Activated CD4-positive, alpha-beta T cell treated with anti-CD3 and anti-CD28 coated beads for 36 hours (primary cell): ENCODE measurements at regions of chr3 and their contacts with region 1.

Region 1: GRCh38 chr3:57397175-57398026 is 104.9 kb upstream of the ASB14 start:
- DNase-seq: peak; percentile 79
- ATAC-seq: peak; percentile 99
- H3K4me3 Mint-ChIP-seq: peak overlapping the region; percentile 7
- H3K27ac Mint-ChIP-seq: peak overlapping the region; percentile 48
- H3K4me1 Mint-ChIP-seq: peaks cover 14% of the 10 kb centered on the region
- H3K27me3 Mint-ChIP-seq: peaks cover 8% of the 10 kb centered on the region

Region 2: DNA sequence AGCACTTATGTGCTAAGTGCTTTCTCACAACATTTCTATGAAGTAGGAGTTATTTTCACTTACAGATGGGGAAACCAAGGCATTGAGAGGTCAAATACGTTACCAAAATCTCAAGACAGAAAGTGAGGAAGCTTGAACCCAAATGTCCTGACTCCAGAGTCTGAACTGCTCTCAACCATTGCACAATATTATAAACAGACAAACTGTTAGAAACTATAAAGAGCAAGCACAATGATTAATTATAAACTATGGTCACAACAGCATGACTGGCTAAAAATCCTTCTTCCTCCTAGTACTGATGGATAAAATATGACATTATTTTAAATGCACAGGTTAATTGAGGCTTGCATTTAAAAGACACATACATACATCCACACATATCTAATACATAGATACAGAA is 27.1 kb before region 1 on chr3:
- CTCF ChIA-PET with region 1: interaction called, 3 read pairs
- POLR2A ChIA-PET with region 1: no interaction called
- intact Hi-C with region 1: loop called in 1 of 2 experiments (anchors 1 kb)
- DNase-seq: no peak
- ATAC-seq: no peak
- H3K4me3 Mint-ChIP-seq: no peak overlapping the region
- H3K27ac Mint-ChIP-seq: no peak overlapping the region
- H3K4me1 Mint-ChIP-seq: no peaks in the 10 kb centered on the region
- H3K27me3 Mint-ChIP-seq: peaks cover 2% of the 10 kb centered on the region

Region 3: GRCh38 chr3:57421336-57421735 is 23.9 kb after region 1 on chr3:
- CTCF ChIA-PET with region 1: interaction called, 13 read pairs
- POLR2A ChIA-PET with region 1: no interaction called
- intact Hi-C with region 1: no loop called
- DNase-seq: no peak
- ATAC-seq: no peak
- H3K4me3 Mint-ChIP-seq: no peak overlapping the region
- H3K27ac Mint-ChIP-seq: no peak overlapping the region
- H3K4me1 Mint-ChIP-seq: no peaks in the 10 kb centered on the region
- H3K27me3 Mint-ChIP-seq: peaks cover 4% of the 10 kb centered on the region

Region 4: DNA sequence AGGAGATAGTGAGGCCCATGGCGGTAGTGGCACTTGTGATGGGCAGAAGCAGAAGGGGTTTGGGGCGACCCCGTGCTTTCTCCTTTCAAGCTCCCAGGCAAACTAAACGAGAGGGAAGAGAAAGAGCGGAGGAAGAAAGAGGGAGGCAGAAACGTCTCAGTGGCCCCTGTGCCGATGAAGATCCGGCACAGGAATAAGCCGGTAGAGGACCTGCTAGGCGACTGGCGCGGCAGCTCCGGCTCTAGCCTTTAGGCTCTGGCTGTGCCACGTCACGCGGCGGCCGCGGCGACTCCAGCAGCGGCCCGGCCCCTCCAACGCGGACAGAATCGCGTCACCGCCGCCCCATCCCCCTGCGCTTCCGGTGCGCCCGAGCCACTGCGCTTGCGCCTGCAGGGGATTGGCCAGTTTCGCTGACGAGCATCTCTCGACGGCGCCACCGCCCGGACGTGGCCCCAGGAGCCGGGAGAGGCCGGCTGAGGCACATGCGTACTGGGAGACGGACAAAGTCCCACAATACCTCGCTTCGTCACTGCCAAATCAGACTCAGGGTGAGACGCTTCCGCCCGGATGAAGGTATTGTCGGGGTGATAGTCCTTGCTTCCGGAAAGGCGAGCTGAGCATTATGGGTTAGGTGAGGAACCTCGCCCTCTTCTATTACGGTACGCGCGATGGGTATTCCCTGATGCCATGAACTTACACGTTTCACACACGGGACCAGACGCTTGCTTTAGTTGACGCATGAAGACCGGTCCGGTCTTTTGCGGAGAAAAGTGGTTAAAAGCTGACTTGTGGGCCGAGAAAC is 199.9 kb after region 1 on chr3 and contains the start of gene ARF4:
- CTCF ChIA-PET with region 1: interaction called, 6 read pairs
- POLR2A ChIA-PET with region 1: no interaction called
- intact Hi-C with region 1: loop called in 1 of 2 experiments (anchors 5 kb)
- DNase-seq: peak; percentile 99
- ATAC-seq: peak; percentile 94
- H3K4me3 Mint-ChIP-seq: peak within 1 kb of the TSS; percentile 98
- H3K27ac Mint-ChIP-seq: peak within 1 kb of the TSS; percentile 99
- H3K4me1 Mint-ChIP-seq: peaks cover 30% of the 10 kb centered on the region
- H3K27me3 Mint-ChIP-seq: no peaks in the 10 kb centered on the region
- total RNA-seq, gene ARF4: 49.6 to 50.0 TPM

Region 5: DNA sequence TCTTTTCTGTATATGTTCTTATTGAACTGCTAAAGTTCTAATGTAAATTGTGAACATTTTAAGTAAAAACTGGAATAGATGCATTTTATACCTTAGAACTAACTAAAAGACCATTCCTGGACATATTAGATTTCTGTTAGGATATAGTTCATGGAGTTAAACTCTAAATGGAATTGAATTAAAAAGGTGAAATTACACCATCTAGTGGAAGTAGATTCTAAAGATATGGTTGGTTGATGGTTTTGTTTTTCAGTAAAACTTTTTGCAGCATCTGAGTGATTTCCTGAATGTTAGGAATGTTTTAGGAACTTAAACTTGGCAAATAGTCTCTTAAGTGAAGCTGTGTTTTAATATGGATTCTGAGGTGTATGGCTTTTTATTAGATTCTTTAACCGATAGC is 455.5 kb after region 1 on chr3:
- CTCF ChIA-PET with region 1: interaction called, 15 read pairs
- POLR2A ChIA-PET with region 1: no interaction called
- intact Hi-C with region 1: loop called (anchors 5 to 10 kb)
- DNase-seq: no peak
- ATAC-seq: no peak
- H3K4me3 Mint-ChIP-seq: no peak overlapping the region
- H3K27ac Mint-ChIP-seq: no peak overlapping the region
- H3K4me1 Mint-ChIP-seq: no peaks in the 10 kb centered on the region
- H3K27me3 Mint-ChIP-seq: no peaks in the 10 kb centered on the region

Region 6: GRCh38 chr3:58144478-58145325 is 747.3 kb after region 1 on chr3:
- CTCF ChIA-PET with region 1: no interaction called
- POLR2A ChIA-PET with region 1: no interaction called
- intact Hi-C with region 1: no loop called
- DNase-seq: no peak
- ATAC-seq: no peak
- H3K4me3 Mint-ChIP-seq: no peak overlapping the region
- H3K27ac Mint-ChIP-seq: no peak overlapping the region
- H3K4me1 Mint-ChIP-seq: no peaks in the 10 kb centered on the region
- H3K27me3 Mint-ChIP-seq: no peaks in the 10 kb centered on the region